ENCODE measurements at regions of chr19 and their contacts with region 1.

Region 1: GRCh38 chr19:1672038-1672768 is 19.8 kb upstream of the TCF3 start:
- DNase-seq: peak in 1 of 7 donors; percentile 30
- H3K4me3 ChIP-seq: no peak overlapping the region
- H3K27ac ChIP-seq: no peak overlapping the region
- H3K4me1 ChIP-seq: peaks cover 0 to 13% of the 10 kb centered on the region in 2 donors
- H3K27me3 ChIP-seq: peaks cover 72% of the 10 kb centered on the region
- CTCF ChIP-seq: peak; percentile 61 to 80 (median 65)
- POLR2A ChIP-seq: no peak

Region 2: GRCh38 chr19:1549332-1549945 is 122.8 kb before region 1 on chr19:
- intact Hi-C with region 1: loop called in 1 of 2 experiments (anchors 5 kb)
- DNase-seq: no peak
- H3K4me3 ChIP-seq: no peak overlapping the region
- H3K27ac ChIP-seq: no peak overlapping the region
- H3K4me1 ChIP-seq: no peaks in the 10 kb centered on the region
- H3K27me3 ChIP-seq: no peaks in the 10 kb centered on the region
- CTCF ChIP-seq: no peak
- POLR2A ChIP-seq: no peak

Region 3: GRCh38 chr19:1767464-1767933 is 95.3 kb after region 1 on chr19:
- intact Hi-C with region 1: loop called (anchors 5 kb)
- DNase-seq: peak in 5 of 7 donors; percentile 28 to 56 (median 45)
- H3K4me3 ChIP-seq: no peak overlapping the region
- H3K27ac ChIP-seq: no peak overlapping the region
- H3K4me1 ChIP-seq: no peaks in the 10 kb centered on the region
- H3K27me3 ChIP-seq: peaks cover 69% of the 10 kb centered on the region
- CTCF ChIP-seq: peak; percentile 75 to 98 (median 90)
- POLR2A ChIP-seq: no peak

Region 4: GRCh38 chr19:1789261-1790041 is 117.2 kb after region 1 on chr19:
- intact Hi-C with region 1: loop called in 1 of 2 experiments (anchors 10 kb)
- DNase-seq: no peak
- H3K4me3 ChIP-seq: no peak overlapping the region
- H3K27ac ChIP-seq: no peak overlapping the region
- H3K4me1 ChIP-seq: no peaks in the 10 kb centered on the region
- H3K27me3 ChIP-seq: peaks cover 14% of the 10 kb centered on the region
- CTCF ChIP-seq: no peak
- POLR2A ChIP-seq: no peak